Activated T-helper 1 cell treated with anti-CD3 and anti-CD28 coated beads, Interleukin-12 subunit alpha, Interleukin-12 subunit beta, Interleukin-2, Interleukin-4 antibody, amounts not matched to agents 30 ng/mL and 10 ng/mL and 1 ng/mL, durations not matched to agents 14 hours and 24 hours and 36 hours (primary cell): ENCODE measurements at regions of chr14 and their contacts with region 1.

Region 1: GRCh38 chr14:71339650-71340415 is 432.6 kb downstream of the PCNX1 start:
- DNase-seq: no peak
- H3K4me3 Mint-ChIP-seq: no peak overlapping the region
- H3K27ac Mint-ChIP-seq: no peak overlapping the region
- H3K4me1 Mint-ChIP-seq: peaks cover 30% of the 10 kb centered on the region
- H3K27me3 Mint-ChIP-seq: no peaks in the 10 kb centered on the region

Region 2: GRCh38 chr14:71117839-71118743 is 221.7 kb before region 1 on chr14:
- intact Hi-C with region 1: no loop called
- DNase-seq: no peak
- H3K4me3 Mint-ChIP-seq: no peak overlapping the region
- H3K27ac Mint-ChIP-seq: peak overlapping the region; percentile 2
- H3K4me1 Mint-ChIP-seq: peaks cover 10% of the 10 kb centered on the region
- H3K27me3 Mint-ChIP-seq: no peaks in the 10 kb centered on the region

Region 3: DNA sequence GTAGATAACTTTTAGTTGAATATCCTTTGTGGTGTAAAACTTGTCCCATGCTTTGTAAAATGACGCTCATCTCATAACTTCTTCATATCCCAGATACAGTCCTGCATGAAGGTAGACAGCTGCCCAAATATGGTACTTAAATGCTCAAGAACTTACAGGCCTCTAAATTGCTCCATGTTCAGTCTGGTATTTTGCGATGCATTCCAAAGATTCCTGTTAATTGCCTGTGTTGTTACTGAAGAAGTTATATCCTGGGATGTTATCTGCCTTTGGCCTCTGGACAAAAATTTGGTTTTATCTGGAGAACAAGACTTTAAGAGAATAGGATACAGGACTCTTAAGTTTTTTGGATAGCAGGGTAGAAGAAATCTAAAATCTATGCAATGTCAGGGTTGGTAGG is 40.4 kb after region 1 on chr14:
- intact Hi-C with region 1: loop called (anchors 5 kb)
- DNase-seq: no peak
- H3K4me3 Mint-ChIP-seq: no peak overlapping the region
- H3K27ac Mint-ChIP-seq: no peak overlapping the region
- H3K4me1 Mint-ChIP-seq: peaks cover 37% of the 10 kb centered on the region
- H3K27me3 Mint-ChIP-seq: no peaks in the 10 kb centered on the region

Region 4: DNA sequence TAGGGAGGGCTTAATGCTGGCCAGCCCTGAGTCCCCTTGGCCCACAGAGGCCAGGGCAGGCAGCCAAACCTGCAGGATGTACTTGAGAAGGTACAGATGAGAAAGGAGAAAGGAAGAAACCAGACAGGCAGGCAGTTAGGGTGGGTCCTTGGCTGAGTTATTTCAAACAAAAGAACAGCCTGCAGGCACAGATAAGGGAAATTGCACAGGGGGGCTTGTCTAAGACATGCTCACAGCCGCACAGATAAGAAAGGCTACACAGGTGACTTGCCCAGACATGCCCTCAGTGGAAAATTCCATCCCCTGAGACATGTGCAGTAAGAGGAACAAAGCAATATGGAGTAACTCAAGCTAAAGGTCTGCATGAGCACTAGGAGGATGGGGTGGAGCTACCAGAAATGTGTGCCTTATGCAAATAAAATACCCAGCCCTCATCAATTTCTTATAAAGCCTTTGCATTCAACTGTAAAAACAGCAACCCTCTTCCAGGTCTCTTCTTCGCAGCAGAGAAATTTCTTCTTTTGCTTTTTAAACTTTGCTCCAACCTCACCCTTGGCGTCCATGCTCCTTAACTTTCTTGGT is 434.2 kb after region 1 on chr14:
- intact Hi-C with region 1: no loop called
- DNase-seq: no peak
- H3K4me3 Mint-ChIP-seq: no peak overlapping the region
- H3K27ac Mint-ChIP-seq: no peak overlapping the region
- H3K4me1 Mint-ChIP-seq: peaks cover 15% of the 10 kb centered on the region
- H3K27me3 Mint-ChIP-seq: peaks cover 4% of the 10 kb centered on the region